ENCODE measurements at regions of chr14 and their contacts with region 1.

Region 1: GRCh38 chr14:36520601-36521525 is 831 bp upstream of the NKX2-1 start:
- DNase-seq: peak; percentile 46
- ATAC-seq: peak; percentile 24
- H3K4me3 Mint-ChIP-seq: no peak overlapping the region
- H3K27ac Mint-ChIP-seq: no peak overlapping the region
- H3K4me1 Mint-ChIP-seq: peaks cover 18% of the 10 kb centered on the region
- H3K27me3 Mint-ChIP-seq: peaks cover 67% of the 10 kb centered on the region

Region 2: DNA sequence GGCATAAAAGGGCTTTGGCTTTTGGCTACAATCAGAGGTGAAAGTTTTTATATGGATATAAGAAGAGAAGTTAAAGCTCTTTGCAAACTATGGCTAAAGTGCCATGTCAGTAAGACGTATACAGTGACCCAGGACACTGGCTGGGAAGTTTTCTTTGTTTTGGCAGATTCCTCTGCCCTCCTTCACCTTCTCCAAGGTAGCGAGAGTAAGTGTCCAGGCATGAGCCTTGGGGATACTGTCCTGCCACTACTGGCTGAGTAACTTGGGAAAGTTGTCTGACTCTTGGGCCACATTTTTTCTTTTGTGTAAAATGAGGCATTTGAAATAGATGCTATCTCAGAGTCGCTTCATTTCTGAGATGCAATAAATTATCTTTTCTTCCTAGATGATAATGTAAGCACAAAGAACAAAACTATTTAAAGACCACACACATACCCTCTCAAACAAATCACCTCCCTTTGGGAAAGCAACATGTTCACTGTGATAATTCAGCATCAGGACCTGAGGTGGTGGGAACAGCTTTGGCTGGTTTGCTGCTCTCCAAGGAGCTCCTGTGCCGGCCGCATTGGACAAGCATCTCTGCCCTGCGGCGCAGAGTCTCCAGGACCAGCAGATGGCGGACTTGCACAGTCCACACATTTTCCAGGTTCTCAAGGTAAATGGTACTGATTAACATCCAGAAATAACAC is 450.7 kb before region 1 on chr14:
- CTCF ChIA-PET with region 1: no interaction called
- POLR2A ChIA-PET with region 1: no interaction called
- intact Hi-C with region 1: loop called in 1 of 2 experiments (anchors 1 kb)
- DNase-seq: peak; percentile 75
- ATAC-seq: peak; percentile 74
- H3K4me3 Mint-ChIP-seq: no peak overlapping the region
- H3K27ac Mint-ChIP-seq: no peak overlapping the region
- H3K4me1 Mint-ChIP-seq: no peaks in the 10 kb centered on the region
- H3K27me3 Mint-ChIP-seq: peaks cover 19% of the 10 kb centered on the region

Region 3: DNA sequence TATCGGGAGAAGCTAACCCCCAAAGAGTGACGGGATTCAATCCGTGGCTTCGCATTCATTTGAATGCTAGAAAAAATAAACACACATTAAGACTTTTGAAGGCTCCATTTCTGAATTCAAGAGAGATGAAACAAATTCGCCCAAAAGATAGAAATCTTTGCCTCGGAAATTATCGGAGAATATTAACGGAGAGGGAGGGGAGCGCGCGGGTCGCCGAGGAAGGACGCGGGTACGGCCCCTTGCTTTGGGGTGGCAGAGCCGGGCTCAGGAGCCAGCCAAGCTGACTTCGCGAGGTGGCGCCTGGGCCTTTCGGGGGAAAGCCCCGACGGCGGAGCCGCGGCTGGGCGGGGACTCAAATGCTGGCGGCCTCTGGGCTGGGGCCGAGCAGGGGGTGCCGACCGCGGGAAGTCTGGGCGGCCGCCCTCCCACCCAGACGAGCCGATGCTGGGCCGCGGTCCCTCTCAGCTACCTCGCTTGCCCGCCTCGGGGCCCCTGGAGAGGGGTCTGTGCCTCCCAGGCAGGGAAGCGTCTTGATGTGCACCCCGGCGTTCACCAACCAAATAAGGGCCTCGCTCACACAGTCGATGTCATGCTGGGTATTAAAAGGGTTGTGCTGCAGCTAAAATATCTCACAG is 15.6 kb before region 1 on chr14:
- CTCF ChIA-PET with region 1: interaction called, 5 read pairs
- POLR2A ChIA-PET with region 1: no interaction called
- intact Hi-C with region 1: loop called (anchors 2 kb)
- DNase-seq: peak; percentile 55
- ATAC-seq: peak; percentile 57
- H3K4me3 Mint-ChIP-seq: peak overlapping the region; percentile 34
- H3K27ac Mint-ChIP-seq: no peak overlapping the region
- H3K4me1 Mint-ChIP-seq: peaks cover 15% of the 10 kb centered on the region
- H3K27me3 Mint-ChIP-seq: peaks cover 73% of the 10 kb centered on the region

Region 4: DNA sequence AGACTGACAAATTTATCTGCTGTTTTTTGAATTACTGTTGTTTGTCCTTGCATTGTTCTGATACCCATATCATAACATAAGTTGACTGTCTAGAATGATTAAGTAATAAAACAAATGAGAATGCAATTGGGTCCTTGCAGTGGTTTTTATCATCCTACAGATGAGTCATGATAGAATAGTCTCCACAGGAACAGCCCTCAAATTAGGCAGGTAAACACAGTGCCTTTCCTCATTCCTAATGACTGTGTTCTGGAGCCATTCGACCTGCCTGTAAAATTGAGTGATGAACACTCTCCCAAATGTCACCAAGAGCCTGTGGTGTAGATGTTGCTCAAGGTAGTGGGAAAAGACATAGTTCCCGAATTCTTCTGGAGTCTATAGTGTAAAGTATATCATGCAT is 49.2 kb after region 1 on chr14:
- CTCF ChIA-PET with region 1: no interaction called
- POLR2A ChIA-PET with region 1: no interaction called
- intact Hi-C with region 1: no loop called
- DNase-seq: no peak
- ATAC-seq: no peak
- H3K4me3 Mint-ChIP-seq: no peak overlapping the region
- H3K27ac Mint-ChIP-seq: no peak overlapping the region
- H3K4me1 Mint-ChIP-seq: no peaks in the 10 kb centered on the region
- H3K27me3 Mint-ChIP-seq: peaks cover 15% of the 10 kb centered on the region

Region 5: GRCh38 chr14:36580856-36581831 is 60.3 kb after region 1 on chr14:
- CTCF ChIA-PET with region 1: interaction called, 3 read pairs
- POLR2A ChIA-PET with region 1: no interaction called
- intact Hi-C with region 1: loop called (anchors 1 to 2 kb)
- DNase-seq: peak; percentile 56
- ATAC-seq: peak; percentile 23
- H3K4me3 Mint-ChIP-seq: no peak overlapping the region
- H3K27ac Mint-ChIP-seq: no peak overlapping the region
- H3K4me1 Mint-ChIP-seq: peaks cover 5% of the 10 kb centered on the region
- H3K27me3 Mint-ChIP-seq: peaks cover 55% of the 10 kb centered on the region

Region 6: DNA sequence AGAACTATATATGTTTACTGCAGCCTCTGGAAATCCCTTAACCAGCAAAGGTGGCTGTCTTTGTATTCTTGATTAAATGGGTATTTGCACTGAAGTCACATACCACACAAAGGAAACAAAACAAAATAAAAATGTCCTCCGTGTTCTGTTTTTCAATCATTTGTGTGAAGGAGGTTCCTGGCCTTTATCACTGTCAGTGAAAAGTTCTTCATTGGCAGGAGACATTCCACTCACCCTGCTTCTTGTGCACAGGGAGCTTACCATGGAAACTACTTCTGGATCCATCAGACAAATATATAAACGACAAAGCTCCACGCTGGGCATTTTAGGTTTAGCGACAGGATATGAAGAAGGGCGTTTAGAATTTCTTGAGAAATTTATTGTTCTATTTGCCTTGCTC is 67.3 kb after region 1 on chr14:
- CTCF ChIA-PET with region 1: interaction called, 3 read pairs
- POLR2A ChIA-PET with region 1: no interaction called
- intact Hi-C with region 1: loop called (anchors 1 to 2 kb)
- DNase-seq: no peak
- ATAC-seq: no peak
- H3K4me3 Mint-ChIP-seq: no peak overlapping the region
- H3K27ac Mint-ChIP-seq: no peak overlapping the region
- H3K4me1 Mint-ChIP-seq: no peaks in the 10 kb centered on the region
- H3K27me3 Mint-ChIP-seq: peaks cover 61% of the 10 kb centered on the region

Region 7: GRCh38 chr14:36655963-36656686 is 135.3 kb after region 1 on chr14:
- CTCF ChIA-PET with region 1: interaction called, 3 read pairs
- POLR2A ChIA-PET with region 1: no interaction called
- intact Hi-C with region 1: loop called (anchors 1 to 2 kb)
- DNase-seq: peak; percentile 69
- ATAC-seq: peak; percentile 58
- H3K4me3 Mint-ChIP-seq: no peak overlapping the region
- H3K27ac Mint-ChIP-seq: no peak overlapping the region
- H3K4me1 Mint-ChIP-seq: peaks cover 26% of the 10 kb centered on the region
- H3K27me3 Mint-ChIP-seq: peaks cover 80% of the 10 kb centered on the region

Region 8: DNA sequence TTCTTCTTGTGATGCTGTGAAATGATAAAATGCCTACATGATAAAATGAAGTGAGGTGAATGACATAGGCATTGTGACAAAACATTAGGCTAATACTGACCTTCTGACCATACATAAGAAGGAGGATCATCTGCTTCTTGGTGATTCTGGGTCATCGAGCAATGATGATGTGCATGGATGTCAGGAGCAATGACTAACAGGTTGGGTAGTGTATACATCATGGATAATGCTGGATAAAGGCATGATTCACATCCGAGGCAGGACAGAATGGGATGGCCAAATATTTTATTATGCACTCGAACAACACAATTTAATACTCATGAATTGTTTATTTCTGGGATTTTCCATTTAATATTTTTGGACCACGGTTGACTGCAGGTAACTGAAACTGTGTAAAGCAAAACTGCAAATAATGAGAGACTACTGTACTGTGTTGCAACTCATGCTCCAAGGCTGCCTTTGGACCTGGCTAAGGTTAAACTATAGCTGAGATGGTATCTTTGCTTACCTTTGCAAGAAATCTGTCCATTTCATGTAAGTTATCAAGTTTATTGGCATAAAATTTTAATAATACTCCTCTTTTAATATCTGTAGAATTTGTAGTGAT is 659.1 kb after region 1 on chr14:
- CTCF ChIA-PET with region 1: no interaction called
- POLR2A ChIA-PET with region 1: no interaction called
- intact Hi-C with region 1: no loop called
- DNase-seq: no peak
- ATAC-seq: no peak
- H3K4me3 Mint-ChIP-seq: no peak overlapping the region
- H3K27ac Mint-ChIP-seq: no peak overlapping the region
- H3K4me1 Mint-ChIP-seq: no peaks in the 10 kb centered on the region
- H3K27me3 Mint-ChIP-seq: no peaks in the 10 kb centered on the region

Region 9: DNA sequence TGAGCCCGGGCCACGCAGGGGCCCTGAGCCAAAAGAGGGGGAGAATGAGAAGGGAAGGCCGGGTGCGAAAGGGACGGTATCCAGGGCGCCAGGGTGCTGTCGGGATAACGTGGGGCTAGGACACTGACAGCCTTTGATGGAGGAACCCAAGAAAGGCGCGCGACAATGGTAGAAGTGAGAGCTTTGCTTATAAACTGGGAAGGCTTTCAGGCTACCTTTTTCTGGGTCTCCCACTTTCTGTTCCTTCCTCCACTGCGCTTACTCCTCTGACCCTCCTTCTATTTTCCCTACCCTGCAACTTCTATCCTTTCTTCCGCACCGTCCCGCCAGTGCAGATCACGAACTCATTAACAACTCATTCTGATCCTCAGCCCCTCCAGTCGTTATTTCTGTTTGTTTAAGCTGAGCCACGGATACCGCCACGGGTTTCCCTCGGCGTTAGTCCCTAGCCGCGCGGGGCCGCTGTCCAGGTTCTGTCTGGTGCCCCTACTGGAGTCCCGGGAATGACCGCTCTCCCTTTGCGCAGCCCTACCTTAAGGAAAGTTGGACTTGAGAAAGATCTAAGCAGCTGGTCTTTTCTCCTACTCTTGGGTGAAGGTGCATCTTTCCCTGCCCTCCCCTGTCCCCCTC is 1689.8 kb after region 1 on chr14:
- CTCF ChIA-PET with region 1: no interaction called
- POLR2A ChIA-PET with region 1: no interaction called
- intact Hi-C with region 1: loop called in 1 of 2 experiments (anchors 5 kb)
- DNase-seq: no peak
- ATAC-seq: no peak
- H3K4me3 Mint-ChIP-seq: no peak overlapping the region
- H3K27ac Mint-ChIP-seq: no peak overlapping the region
- H3K4me1 Mint-ChIP-seq: peaks cover 21% of the 10 kb centered on the region
- H3K27me3 Mint-ChIP-seq: peaks cover 49% of the 10 kb centered on the region

Measured in activated CD4-positive, alpha-beta T cell treated with anti-CD3 and anti-CD28 coated beads for 36 hours (primary cell).